ENCODE measurements at regions of chr20 and their contacts with region 1.

Region 1: DNA sequence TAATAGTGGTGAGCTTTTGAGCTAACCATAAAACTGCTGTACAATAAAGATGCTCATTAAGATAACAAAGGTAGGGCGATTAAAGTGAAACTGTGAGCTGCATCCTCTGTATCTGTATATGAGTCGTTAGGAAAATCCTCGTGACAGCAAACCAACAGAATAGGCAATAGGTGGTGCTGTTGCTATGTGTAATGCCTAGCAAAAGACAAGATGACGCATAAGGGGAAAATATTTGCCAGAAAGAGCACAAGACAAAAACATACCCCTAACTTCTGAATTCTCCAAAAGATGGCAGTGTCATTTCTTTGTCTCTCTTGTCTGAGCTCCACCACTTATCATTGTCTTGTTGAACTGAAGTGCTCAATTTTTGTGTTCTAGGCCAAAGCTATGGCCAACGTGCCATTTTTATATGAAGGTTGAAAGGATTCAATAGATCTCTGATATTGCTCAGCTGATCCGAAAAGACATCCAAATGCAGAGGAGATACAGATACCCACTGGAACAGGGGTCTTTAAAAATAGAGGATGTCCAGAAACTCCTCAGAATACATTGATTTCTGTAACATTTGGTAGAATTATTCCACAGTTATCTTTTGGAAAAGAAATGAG is 56.3 kb upstream of the ANKEF1 start:
- DNase-seq: no peak
- ATAC-seq: peak; percentile 87

Region 2: GRCh38 chr20:10090588-10091166 is 112.2 kb after region 1 on chr20:
- intact Hi-C with region 1: loop called (anchors 5 kb)
- DNase-seq: peak; percentile 45
- ATAC-seq: peak; percentile 79

Region 3: GRCh38 chr20:10427060-10427692 is 448.7 kb after region 1 on chr20:
- intact Hi-C with region 1: loop called (anchors 10 kb)
- DNase-seq: peak; percentile 68
- ATAC-seq: peak; percentile 70

Measured in Right ventricle myocardium superior (tissue), 1 donor.